PC-3 (cell line): ENCODE measurements at regions of chr7 and their contacts with region 1.

Region 1: DNA sequence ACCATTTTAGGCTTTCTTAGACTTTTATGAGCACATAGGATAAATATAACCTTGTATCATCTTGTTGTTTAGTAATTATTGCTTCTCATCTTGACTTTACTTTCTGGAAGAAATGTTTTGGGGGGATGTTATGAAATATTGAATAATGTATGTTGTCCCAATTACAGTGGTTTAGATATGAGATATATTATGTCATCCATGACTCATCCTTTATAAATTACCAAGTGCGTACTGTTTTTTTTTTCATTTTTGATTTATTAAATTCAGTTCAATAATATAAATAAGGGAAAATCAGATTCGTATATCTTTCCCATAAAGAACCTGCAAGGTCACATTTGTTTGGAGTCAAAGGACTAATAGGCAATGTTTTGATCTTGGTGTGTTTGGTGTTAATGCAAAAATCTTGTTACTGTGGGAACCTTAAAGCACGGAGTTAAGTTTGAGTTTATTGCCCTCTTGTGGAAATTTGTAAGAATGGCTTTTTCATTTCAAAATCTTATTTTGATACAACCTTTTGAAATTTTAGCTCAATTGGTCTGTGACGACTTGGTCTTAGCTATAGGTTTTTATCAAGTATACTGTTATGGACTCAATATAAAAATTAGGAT is 108.6 kb downstream of the SRI start:
- DNase-seq: peak; percentile 59
- ATAC-seq: peak; percentile 53
- H3K4me3 ChIP-seq: no peak overlapping the region
- H3K27ac ChIP-seq: no peak overlapping the region
- H3K4me1 ChIP-seq: no peaks in the 10 kb centered on the region
- H3K27me3 ChIP-seq: no peaks in the 10 kb centered on the region
- CTCF ChIP-seq: peak; percentile 74

Region 2: DNA sequence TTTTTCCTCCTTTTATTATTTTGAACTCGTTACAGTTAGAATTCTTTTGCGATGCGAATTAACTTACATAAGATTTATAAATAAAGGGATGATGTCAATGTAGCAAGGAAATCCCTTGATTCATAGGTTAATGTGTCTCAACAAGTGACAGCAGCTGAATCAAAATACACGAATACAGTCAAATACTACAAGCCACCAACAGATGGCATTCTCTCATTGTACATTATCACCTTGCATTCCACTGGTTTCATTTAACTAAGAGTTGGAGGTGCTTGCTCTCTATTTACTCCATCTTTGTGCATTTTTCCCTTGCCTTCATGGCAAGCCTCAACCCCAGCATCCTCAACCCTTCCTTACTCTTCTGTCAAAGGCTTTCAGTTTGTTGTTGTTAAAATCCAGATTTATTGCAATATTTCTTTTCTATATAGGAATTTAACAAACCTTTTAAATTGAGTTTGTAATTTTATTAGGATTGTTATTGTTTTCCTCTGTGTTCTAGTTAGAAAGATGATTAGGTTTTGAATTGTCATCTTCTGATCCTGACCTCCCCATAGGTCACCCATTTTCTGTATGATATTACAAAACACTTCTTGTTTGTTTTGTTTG is 313.3 kb before region 1 on chr7:
- CTCF ChIA-PET with region 1: no interaction called
- POLR2A ChIA-PET with region 1: no interaction called
- intact Hi-C with region 1: loop called (anchors 1 kb)
- DNase-seq: peak; percentile 68
- ATAC-seq: peak; percentile 96
- H3K4me3 ChIP-seq: no peak overlapping the region
- H3K27ac ChIP-seq: no peak overlapping the region
- H3K4me1 ChIP-seq: no peaks in the 10 kb centered on the region
- H3K27me3 ChIP-seq: no peaks in the 10 kb centered on the region
- CTCF ChIP-seq: peak; percentile 77

Region 3: DNA sequence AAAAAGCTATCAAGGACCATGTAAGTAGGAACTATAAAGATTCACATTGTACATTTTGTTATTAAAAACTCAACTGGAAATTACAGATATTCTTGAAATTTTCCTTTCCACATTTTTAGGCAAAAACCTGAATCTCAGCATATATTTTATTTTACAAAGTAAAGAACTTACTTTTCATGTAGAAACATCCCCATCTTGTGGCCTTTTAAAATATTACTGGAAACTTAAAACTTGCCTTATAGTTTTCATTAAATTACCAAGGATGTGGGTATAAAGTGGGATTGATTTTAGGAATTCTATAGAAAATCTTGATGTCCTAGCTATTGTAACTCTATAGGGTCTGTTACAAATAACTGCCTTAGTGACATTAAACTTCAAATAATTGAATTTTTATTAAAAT is 224.4 kb before region 1 on chr7:
- CTCF ChIA-PET with region 1: no interaction called
- POLR2A ChIA-PET with region 1: no interaction called
- intact Hi-C with region 1: loop called (anchors 1 kb)
- DNase-seq: peak; percentile 68
- ATAC-seq: no peak
- H3K4me3 ChIP-seq: no peak overlapping the region
- H3K27ac ChIP-seq: no peak overlapping the region
- H3K4me1 ChIP-seq: no peaks in the 10 kb centered on the region
- H3K27me3 ChIP-seq: no peaks in the 10 kb centered on the region
- CTCF ChIP-seq: peak; percentile 64

Region 4: GRCh38 chr7:87910138-87910537 is 201.1 kb before region 1 on chr7:
- CTCF ChIA-PET with region 1: interaction called, 3 read pairs
- POLR2A ChIA-PET with region 1: no interaction called
- intact Hi-C with region 1: loop called (anchors 5 kb)
- DNase-seq: no peak
- ATAC-seq: no peak
- H3K4me3 ChIP-seq: no peak overlapping the region
- H3K27ac ChIP-seq: no peak overlapping the region
- H3K4me1 ChIP-seq: no peaks in the 10 kb centered on the region
- H3K27me3 ChIP-seq: no peaks in the 10 kb centered on the region
- CTCF ChIP-seq: no peak

Region 5: DNA sequence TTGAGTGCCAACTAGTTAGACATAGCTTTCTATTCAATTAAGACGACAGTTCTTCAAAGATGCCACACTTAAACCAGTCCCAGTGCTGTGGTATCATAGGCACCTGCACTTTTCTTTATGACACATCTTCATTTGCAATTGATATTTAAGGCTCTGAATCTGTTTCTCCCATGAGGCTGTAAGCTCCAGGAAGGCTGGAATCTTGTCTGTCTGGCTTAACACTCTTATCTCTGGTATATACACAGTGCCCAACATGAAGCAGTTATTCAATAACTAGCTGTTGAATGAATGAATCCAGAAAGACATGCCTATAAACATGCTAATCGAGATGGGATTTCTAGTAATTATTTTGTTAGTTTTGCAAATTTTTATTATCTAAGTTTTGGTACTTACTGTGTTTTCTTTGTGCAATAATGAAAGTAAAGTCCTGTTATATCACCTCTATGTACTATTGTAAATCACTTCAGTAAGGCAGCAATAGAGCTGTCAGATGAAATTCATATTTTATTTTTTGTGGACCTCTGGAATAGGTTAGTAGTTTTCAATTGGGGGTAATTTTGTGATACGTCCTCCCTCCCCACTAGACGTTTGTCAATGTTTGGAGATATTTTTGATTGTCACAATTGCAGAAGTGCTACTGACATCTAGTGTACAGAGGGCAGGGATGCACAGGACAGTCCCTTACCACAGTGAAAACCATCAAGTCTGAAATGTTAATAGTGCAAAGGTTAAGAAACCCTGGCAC is 246.7 kb after region 1 on chr7:
- CTCF ChIA-PET with region 1: no interaction called
- POLR2A ChIA-PET with region 1: no interaction called
- intact Hi-C with region 1: loop called (anchors 10 kb)
- DNase-seq: peak; percentile 54
- ATAC-seq: peak; percentile 75
- H3K4me3 ChIP-seq: peak overlapping the region; percentile 46
- H3K27ac ChIP-seq: no peak overlapping the region
- H3K4me1 ChIP-seq: 0 out of 2 replicates have a peak, but pooled peaks cover 6% of the 10 kb centered on the region
- H3K27me3 ChIP-seq: no peaks in the 10 kb centered on the region
- CTCF ChIP-seq: peak; percentile 76